Ascending aorta (tissue), 2 donors: ENCODE measurements at regions of chr10 and their contacts with region 1.

Region 1: DNA sequence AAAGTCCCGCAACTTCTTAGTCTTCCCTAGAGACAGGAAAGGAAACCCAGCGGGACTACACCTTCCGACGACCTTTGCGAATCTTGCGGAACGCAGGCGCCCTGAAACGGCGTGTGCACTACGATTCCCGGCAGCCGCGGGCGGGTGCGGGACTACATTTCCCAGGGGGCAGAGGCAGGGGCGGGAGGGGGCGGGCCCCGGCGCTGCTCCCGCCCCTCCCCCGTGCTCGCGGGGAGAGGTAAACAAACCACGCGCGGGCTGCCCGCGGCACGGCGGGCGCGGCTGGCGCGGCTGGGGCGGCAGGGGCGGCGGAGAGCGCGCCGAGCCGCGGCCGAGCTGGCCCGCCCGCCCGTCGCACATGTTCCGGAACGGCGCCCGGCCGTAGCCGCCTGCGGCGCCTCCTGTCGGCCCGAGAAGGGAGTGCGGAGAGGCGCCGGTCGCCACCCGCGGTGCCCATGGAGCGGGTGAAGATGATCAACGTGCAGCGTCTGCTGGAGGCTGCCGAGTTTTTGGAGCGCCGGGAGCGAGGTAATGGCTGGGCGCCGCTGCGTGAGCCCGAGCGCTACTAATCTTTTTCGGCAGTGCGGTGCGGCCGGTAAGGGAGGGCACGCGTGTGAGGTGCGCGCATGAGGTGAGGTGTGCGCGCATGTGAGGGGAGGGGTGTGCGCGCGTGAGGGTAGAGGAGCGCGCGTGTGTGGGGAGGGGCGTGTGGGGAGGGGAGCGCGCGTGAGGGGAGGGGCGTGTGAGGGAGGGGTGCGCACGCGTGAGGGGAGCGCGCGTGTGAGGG is 18.5 kb downstream of the MXI1 start:
- DNase-seq: peak; percentile 63 to 95
- H3K4me3 ChIP-seq: peak overlapping the region; percentile 84 to 94
- H3K27ac ChIP-seq: peak overlapping the region; percentile 87 to 98
- H3K4me1 ChIP-seq: peaks cover 0 to 22% of the 10 kb centered on the region in 2 donors
- H3K27me3 ChIP-seq: no peaks in the 10 kb centered on the region
- CTCF ChIP-seq: peak; percentile 76 to 93 (median 77)

Region 2: DNA sequence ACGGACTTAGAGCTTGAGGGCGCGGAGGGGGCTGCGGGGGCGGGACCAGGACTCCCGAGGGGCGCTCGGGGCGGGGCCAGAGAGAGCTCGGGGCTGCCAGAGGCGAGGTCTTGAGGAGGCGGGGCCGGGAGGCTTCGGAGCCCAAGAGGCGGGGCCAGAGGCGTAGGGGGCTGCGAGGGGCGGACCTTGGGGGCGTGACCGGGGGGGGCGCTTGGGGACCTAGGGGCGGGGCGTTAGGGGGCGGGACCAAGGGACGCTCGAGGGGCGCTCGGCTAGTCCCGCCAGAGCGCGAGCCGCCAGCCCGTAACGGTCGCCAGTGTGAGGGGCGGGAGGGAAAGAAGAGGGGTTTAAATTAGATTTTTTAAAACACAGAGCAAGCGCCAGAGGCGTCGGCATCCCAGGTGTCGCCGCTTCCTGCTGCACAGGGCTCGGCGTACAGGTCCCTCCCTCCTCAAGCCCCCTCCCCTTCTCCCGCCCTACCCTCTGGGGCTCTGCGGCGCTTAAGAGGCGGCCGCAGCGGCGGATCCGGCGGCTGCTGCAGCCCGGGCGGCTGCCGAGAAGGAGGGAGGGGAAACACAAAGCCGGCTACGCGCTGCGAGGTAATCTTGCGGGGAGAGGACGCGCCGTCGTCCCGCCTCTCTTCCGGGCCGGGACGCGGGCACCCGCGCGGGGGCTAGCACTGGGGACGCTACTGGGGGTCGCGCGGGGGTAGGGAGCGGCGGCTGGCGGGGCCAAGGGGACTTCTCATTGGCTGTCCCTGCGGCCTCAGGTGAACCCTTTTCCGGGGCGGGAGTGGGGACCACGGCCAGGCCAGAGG is 218.0 kb before region 1 on chr10 and contains the start of gene ADD3:
- intact Hi-C with region 1: loop called (anchors 5 kb)
- DNase-seq: peak; percentile 77 to 97
- H3K4me3 ChIP-seq: peak within 1 kb of the TSS; percentile 68 to 100
- H3K27ac ChIP-seq: peak within 1 kb of the TSS; percentile 94 to 99
- H3K4me1 ChIP-seq: peaks cover 3 to 15% of the 10 kb centered on the region in 2 donors
- H3K27me3 ChIP-seq: no peaks in the 10 kb centered on the region
- CTCF ChIP-seq: no peak
- total RNA-seq, gene ADD3: 93.0 TPM

Region 3: DNA sequence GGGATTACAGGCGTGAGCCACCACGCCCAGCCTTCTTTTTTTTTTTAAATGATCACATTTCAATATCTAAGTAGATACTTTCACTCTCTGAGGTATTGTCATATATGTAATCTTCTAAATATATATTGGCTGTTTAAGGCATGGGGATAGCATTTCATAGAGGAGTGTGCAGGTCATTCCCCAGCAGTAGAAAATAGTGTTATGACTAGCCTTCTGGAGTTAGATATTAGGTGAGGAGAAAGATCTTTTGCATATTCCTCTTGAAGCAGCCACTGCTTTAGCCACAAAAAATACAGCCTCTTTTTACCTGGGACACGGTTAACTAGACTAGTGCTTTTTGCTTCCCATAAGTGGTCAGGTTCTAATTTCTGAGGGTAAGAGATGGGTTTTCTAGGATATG is 189.3 kb before region 1 on chr10:
- intact Hi-C with region 1: no loop called
- DNase-seq: no peak
- H3K4me3 ChIP-seq: no peak overlapping the region
- H3K27ac ChIP-seq: no peak overlapping the region
- H3K4me1 ChIP-seq: peaks cover 0 to 25% of the 10 kb centered on the region in 2 donors
- H3K27me3 ChIP-seq: no peaks in the 10 kb centered on the region
- CTCF ChIP-seq: no peak

Region 4: DNA sequence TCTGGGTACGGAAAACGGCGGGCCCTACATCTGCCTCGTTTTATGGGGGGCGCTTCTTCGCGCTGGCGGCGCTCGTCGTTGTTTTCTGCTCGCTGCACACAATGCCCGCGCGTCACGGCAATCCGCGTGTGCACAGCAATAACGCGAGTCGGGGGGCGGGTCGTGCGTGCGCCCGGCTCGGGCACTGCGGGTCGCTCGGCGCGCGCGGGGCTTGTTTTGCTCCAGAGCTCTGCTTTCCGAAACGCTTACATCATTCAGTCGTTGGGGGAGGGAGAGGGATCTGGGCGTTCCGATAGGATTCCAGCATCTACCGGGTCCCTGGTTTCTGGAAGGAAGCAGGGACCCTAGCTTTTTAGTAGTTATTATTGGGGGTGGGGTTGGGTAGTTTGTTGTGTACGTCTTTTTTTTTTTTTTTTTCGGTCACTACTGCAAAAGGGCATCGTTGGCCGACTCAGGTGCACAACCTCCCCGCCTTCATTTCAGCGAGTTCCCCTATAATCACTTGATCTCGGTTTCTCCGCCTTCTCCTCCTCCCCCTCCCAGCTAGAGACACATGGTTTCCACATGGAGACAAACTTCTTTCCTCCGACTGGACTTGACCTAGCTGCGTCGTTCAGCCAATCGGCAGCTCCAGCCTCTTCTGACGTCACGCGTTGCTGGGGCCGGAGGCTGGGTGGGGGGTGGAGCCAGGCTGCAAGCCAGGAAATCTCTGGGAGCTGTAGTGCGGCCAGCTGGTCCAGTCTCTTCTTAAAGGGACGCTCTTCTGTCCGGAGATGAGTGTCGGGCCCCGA is 15.1 kb before region 1 on chr10:
- intact Hi-C with region 1: loop called (anchors 1 kb)
- DNase-seq: peak; percentile 89 to 98
- H3K4me3 ChIP-seq: peak overlapping the region; percentile 74 to 93
- H3K27ac ChIP-seq: peak overlapping the region; percentile 97 to 99
- H3K4me1 ChIP-seq: peaks cover 3 to 34% of the 10 kb centered on the region in 2 donors
- H3K27me3 ChIP-seq: no peaks in the 10 kb centered on the region
- CTCF ChIP-seq: peak in 1 of 3 experiments; percentile 2

Region 5: DNA sequence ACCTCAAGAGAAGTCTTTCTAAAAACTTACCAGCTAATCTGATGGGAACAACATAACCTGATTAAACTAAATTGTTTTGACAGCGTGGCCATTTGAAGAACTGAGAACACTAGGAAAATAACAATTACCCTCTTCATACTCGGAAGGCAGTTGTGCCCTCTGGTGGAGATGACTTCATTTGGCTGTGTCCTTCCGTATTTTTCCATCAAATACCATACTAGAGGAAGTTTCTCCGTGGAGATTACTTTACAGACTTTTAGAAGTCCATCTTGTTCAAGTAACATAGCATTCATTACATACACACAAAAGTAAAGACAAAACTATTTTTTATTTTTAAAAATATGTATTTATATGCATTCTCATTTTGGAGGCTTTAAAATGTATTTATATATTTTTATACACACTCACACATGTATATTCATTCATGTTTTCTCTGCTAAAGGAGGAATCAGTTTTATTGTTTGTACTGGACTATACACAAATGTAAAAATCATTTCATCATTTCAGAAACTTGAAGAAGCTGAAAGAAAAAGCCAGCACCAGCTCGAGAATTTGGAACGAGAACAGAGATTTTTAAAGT is 53.5 kb after region 1 on chr10:
- intact Hi-C with region 1: loop called (anchors 2 kb)
- DNase-seq: peak in 1 of 2 donors; percentile 81
- H3K4me3 ChIP-seq: peak overlapping the region; percentile 14 to 33
- H3K27ac ChIP-seq: peak overlapping the region; percentile 30 to 42
- H3K4me1 ChIP-seq: peaks cover 0 to 46% of the 10 kb centered on the region in 2 donors
- H3K27me3 ChIP-seq: no peaks in the 10 kb centered on the region
- CTCF ChIP-seq: peak; percentile 66 to 78 (median 76)

Region 6: GRCh38 chr10:110497438-110498086 is 271.6 kb after region 1 on chr10 and contains the start of gene DUSP5:
- intact Hi-C with region 1: loop called (anchors 1 kb)
- DNase-seq: peak; percentile 83 to 97
- H3K4me3 ChIP-seq: peak within 1 kb of the TSS; percentile 77
- H3K27ac ChIP-seq: peak within 1 kb of the TSS; percentile 89 to 93
- H3K4me1 ChIP-seq: peaks cover 0 to 22% of the 10 kb centered on the region in 2 donors
- H3K27me3 ChIP-seq: no peaks in the 10 kb centered on the region
- CTCF ChIP-seq: no peak
- total RNA-seq, gene DUSP5: 26.9 TPM

Region 7: DNA sequence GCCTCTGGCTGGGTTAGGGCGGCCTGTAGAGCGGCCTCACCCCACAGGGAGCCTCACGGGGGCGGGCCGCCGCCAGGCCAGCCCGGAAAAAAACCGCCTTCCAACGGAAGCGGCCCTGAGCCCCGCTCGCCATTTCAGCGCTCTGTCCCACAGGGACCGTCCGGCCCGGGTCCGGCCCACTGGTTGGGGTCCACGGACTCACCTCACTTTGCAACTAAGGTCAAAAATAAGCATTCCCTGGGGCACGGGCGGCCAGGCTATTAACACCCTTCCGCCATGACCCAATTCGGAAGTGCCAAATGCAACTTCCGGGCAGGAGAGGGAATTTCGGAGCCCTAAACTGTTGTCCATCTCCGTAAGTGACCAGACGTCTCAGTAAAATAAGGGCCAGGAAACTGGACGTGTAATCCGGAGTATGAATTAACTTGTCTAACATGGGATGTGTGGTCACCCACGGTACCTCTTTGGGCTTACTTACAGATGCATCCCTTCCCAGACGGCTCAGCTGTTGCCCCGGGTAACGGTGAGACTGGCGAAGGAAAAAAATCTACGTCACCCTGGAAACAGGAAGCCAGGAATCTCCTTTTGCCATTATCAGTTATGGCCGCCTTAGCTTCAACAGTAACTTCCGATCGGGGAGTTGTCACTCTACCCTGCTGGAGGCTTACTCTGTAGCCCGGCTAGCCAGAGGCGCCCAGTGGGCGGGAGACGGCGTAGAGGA is 692.9 kb after region 1 on chr10 and contains the start of gene BBIP1:
- intact Hi-C with region 1: loop called (anchors 5 kb)
- DNase-seq: no peak
- H3K4me3 ChIP-seq: peak within 1 kb of the TSS; percentile 78 to 98
- H3K27ac ChIP-seq: peak within 1 kb of the TSS; percentile 96 to 97
- H3K4me1 ChIP-seq: peaks cover 0 to 11% of the 10 kb centered on the region in 2 donors
- H3K27me3 ChIP-seq: no peaks in the 10 kb centered on the region
- CTCF ChIP-seq: no peak
- total RNA-seq, gene BBIP1: 1.5 TPM